ENCODE measurements at regions of chr18 and their contacts with region 1.

Region 1: GRCh38 chr18:76803814-76804213 is 18.5 kb upstream of the ZNF236 start:
- DNase-seq: peak; percentile 51
- ATAC-seq: peak; percentile 84
- H3K4me3 ChIP-seq: no peak overlapping the region
- H3K27ac ChIP-seq: no peak overlapping the region
- H3K4me1 ChIP-seq: peaks cover 7% of the 10 kb centered on the region; the same call in 1 of the 2 replicates
- H3K27me3 ChIP-seq: no peaks in the 10 kb centered on the region
- CTCF ChIP-seq: peak; percentile 87 to 91 (median 90)
- EP300 ChIP-seq: no peak
- POLR2A ChIP-seq: no peak
- RAD21 ChIP-seq: peak; percentile 77

Region 2: GRCh38 chr18:76783759-76784484 is 19.9 kb before region 1 on chr18:
- CTCF ChIA-PET with region 1: interaction called, 35 read pairs
- POLR2A ChIA-PET with region 1: interaction called, 10 read pairs
- RAD21 ChIA-PET with region 1: no interaction called
- SMC1A ChIA-PET with region 1: interaction called, 3 read pairs
- in situ Hi-C with region 1: no loop called
- intact Hi-C with region 1: no loop called
- DNase-seq: no peak
- ATAC-seq: no peak
- H3K4me3 ChIP-seq: no peak overlapping the region
- H3K27ac ChIP-seq: no peak overlapping the region
- H3K4me1 ChIP-seq: no peaks in the 10 kb centered on the region
- H3K27me3 ChIP-seq: no peaks in the 10 kb centered on the region; a peak in 1 of 4 replicates
- CTCF ChIP-seq: no peak
- EP300 ChIP-seq: no peak
- POLR2A ChIP-seq: no peak
- RAD21 ChIP-seq: no peak

Region 3: DNA sequence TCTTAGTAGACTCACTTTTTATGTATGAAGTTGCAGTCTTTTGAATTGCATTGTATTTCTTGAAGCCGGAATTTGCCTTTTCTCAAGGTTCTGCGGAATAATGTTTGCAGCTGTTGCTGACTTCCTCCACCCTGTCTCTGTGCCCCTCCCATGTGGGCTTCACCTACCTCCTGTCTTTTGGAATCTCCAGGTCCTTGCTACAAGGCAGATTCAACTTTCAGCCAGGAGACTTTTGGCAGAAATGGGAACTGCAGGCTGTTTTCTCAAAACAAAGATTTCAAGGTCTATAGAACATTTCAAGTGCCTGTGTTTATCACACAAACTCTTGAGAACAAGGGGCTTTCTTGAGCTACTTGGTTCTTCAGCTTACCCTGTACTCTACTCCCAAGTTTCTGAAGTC is 44.1 kb after region 1 on chr18:
- CTCF ChIA-PET with region 1: interaction called, 21 read pairs
- POLR2A ChIA-PET with region 1: no interaction called
- RAD21 ChIA-PET with region 1: interaction called, 4 read pairs
- SMC1A ChIA-PET with region 1: interaction called, 10 read pairs
- in situ Hi-C with region 1: no loop called
- intact Hi-C with region 1: loop called (anchors 2 kb)
- DNase-seq: no peak
- ATAC-seq: peak; percentile 48
- H3K4me3 ChIP-seq: no peak overlapping the region
- H3K27ac ChIP-seq: no peak overlapping the region
- H3K4me1 ChIP-seq: no peaks in the 10 kb centered on the region
- H3K27me3 ChIP-seq: no peaks in the 10 kb centered on the region
- CTCF ChIP-seq: peak in 1 of 3 experiments; percentile 18; a peak in 1 of 6 replicates
- EP300 ChIP-seq: no peak
- POLR2A ChIP-seq: no peak
- RAD21 ChIP-seq: 0 out of 2 replicates have a peak, but pooled peaks have one; percentile 3

Region 4: DNA sequence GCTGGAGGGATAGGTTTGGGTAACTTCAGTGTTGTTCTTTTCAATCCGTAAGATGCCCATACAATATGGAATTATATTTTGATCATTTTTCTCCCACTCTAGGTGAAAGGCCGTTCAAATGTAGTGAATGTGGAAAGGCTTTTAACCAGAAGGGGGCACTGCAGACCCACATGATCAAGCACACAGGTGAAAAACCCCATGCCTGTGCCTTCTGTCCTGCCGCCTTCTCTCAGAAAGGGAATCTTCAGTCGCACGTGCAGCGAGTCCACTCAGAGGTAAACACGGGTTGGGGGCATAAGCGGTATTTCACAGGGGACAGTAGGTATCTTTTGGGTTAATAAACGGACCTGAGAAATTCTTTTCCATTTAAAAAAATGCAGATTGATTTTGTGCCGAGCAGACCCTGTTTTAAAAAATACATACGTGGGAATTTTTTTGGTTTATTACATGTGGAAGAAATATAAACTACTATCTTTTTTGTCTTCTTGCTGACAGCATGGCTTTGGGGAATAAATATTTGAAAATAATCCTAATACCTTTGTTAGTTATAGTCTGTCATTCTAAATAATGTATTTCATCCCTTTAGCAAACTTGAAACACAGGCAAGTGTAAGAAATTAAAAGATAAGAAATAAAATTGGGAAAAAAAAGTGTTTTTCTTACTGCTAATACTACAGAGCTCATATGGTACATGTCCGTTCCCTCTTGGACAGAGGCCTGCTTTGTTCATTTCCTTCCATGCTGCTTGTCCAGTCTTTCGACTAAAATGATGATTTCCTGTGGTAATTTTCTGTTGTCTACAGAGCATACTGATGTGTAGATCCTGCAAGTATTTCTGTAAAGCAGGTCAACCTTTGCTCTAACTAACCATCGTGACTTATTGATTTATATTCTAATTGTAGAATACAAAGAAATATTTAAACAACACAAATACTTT is 71.8 kb after region 1 on chr18:
- CTCF ChIA-PET with region 1: interaction called, 24 read pairs
- POLR2A ChIA-PET with region 1: no interaction called
- RAD21 ChIA-PET with region 1: interaction called, 5 read pairs
- SMC1A ChIA-PET with region 1: interaction called, 5 read pairs
- in situ Hi-C with region 1: no loop called
- intact Hi-C with region 1: loop called (anchors 1 kb)
- DNase-seq: no peak
- ATAC-seq: peak; percentile 88
- H3K4me3 ChIP-seq: no peak overlapping the region
- H3K27ac ChIP-seq: no peak overlapping the region
- H3K4me1 ChIP-seq: no peaks in the 10 kb centered on the region
- H3K27me3 ChIP-seq: no peaks in the 10 kb centered on the region
- CTCF ChIP-seq: peak; percentile 54 to 69 (median 63); a peak in 5 of 6 replicates
- EP300 ChIP-seq: no peak
- POLR2A ChIP-seq: no peak
- RAD21 ChIP-seq: peak; percentile 68

Region 5: DNA sequence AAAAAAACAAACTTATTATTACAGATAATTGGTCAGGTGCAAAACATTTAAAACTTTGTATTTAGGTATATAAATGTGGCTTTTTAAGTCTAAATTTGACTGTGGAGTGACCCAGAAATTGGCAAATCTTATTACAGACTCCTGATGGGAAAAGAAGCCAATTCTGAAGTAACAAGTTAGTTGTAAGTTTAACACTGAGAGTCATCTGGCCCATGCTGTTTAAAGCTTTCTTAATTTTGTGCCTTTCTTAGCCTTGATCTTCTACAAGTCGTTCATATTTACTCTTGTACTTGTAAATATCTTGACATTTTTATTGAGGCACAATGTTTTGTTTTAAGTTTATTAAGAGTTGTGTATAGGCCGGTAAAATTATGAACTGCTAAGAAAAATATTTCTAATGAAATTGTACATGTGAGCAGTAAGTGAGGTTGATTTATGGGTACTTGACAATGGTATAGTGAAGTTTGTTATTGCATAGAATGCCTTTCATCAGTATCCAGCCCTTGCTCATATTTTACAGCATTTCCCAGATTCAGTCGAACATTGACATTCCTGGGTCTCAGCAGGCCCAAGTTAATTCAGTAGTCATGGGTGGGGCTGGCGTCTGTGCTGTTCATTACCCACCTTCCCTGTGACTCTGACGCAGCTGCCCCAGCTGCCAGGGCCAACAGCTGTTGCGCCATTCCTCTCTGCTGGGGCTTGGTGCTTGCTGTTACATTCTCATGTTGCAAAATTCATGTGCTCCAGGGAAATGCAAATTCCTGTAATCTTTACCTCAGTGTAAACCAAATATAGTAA is 139.9 kb after region 1 on chr18:
- CTCF ChIA-PET with region 1: interaction called, 15 read pairs
- POLR2A ChIA-PET with region 1: no interaction called
- RAD21 ChIA-PET with region 1: no interaction called
- SMC1A ChIA-PET with region 1: interaction called, 3 read pairs
- in situ Hi-C with region 1: no loop called
- intact Hi-C with region 1: no loop called
- DNase-seq: no peak
- ATAC-seq: no peak
- H3K4me3 ChIP-seq: no peak overlapping the region
- H3K27ac ChIP-seq: no peak overlapping the region
- H3K4me1 ChIP-seq: no peaks in the 10 kb centered on the region
- H3K27me3 ChIP-seq: no peaks in the 10 kb centered on the region
- CTCF ChIP-seq: no peak
- EP300 ChIP-seq: no peak
- POLR2A ChIP-seq: no peak
- RAD21 ChIP-seq: no peak

Region 6: DNA sequence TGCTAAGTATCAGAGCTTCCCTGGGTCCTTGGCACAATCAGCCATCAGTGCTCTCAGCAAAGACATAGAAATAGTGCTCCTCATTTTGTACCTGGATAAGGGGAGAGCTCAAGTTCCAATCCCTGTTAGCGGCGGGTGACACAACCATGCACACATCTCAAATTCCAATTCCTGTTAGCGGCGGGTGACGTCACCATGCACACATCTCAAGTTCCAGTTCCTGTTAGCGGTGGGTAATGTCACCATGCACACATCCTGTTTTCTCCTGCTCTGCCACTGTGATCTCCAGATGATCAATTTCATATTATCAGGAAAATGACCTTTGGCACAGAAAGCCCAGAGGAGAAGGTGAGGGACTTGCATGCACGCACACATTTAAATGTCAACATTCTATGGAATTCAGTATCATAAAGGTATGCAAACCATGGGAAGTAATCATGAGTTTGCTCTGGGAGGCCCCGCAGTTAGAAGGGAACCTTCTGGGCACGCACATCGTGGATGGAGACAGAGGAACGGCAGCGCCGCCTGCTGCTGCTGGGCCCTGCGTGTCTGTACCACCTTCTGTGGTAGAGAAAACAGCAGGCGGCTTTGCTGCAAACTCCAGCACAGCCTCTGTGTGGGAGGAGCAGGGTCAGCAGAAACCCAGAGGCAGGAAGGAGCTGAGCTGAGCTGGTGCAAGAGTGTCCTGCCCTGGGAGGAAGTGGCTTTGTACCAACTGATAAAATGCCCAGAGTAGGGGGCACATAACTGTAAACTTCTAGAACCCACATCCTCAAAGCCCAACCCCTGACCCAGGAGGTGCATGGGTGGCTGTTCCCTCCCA is 251.0 kb after region 1 on chr18:
- CTCF ChIA-PET with region 1: interaction called, 18 read pairs
- POLR2A ChIA-PET with region 1: no interaction called
- RAD21 ChIA-PET with region 1: no interaction called
- SMC1A ChIA-PET with region 1: no interaction called
- in situ Hi-C with region 1: no loop called
- intact Hi-C with region 1: no loop called
- DNase-seq: peak; percentile 80
- ATAC-seq: peak; percentile 93
- H3K4me3 ChIP-seq: peak overlapping the region; percentile 53
- H3K27ac ChIP-seq: peak overlapping the region; percentile 88
- H3K4me1 ChIP-seq: peaks cover 46% of the 10 kb centered on the region
- H3K27me3 ChIP-seq: no peaks in the 10 kb centered on the region
- CTCF ChIP-seq: peak; percentile 73 to 78 (median 75)
- EP300 ChIP-seq: peak; percentile 70 to 74
- POLR2A ChIP-seq: no peak; the same call in 1 of the 2 replicates
- RAD21 ChIP-seq: peak; percentile 58

Measured in GM12878 (cell line).